WTC11 (cell line): ENCODE measurements at regions of chr12 and their contacts with region 1.

Region 1: DNA sequence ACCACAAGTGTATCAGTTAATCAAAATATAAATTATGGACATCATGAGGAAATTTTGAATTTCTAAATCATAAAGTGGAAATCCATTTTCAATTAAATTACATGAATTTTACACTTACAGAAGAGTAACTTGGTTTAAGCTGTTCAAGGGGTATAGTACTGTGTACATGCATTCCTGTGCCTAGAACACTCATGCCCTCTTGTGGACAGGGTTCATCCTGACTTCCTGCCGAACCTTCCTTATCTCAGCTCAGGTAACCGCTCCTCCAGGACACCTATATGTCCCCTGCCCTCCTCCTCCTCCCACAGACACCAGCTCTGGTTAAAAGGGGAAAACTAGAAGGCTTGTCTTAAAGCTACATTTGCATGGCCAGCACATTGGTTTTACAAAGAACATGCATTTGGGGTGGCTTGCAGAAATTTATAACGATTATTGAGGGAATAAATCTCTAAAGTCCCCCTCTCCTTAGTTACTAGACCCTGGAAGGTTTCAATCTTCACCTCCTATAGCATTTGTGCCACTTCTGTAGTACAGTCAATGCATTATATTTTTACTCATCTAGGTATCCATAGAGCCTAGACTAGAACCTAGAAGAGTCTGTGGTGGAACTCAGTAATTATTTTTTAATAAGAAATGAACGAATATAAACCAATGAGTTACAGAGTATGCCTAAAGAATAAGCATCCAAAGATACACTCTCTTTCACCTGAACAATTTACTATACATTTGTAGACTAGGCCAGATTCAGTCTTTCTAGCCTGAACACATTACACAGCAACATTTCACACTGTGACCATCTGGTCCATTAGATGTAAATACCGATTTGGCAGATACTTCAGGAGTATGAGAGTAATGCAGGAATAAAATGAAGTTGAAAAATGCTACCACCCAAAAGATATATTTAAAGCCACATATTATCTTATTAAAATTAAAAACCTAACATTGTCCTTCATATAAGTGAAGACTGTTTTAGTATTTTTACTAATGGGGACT is 345.6 kb downstream of the PAWR start:
- DNase-seq: peak; percentile 61
- ATAC-seq: peak; percentile 100
- H3K4me3 Mint-ChIP-seq: no peak overlapping the region
- H3K27ac Mint-ChIP-seq: no peak overlapping the region
- H3K4me1 Mint-ChIP-seq: no peaks in the 10 kb centered on the region
- H3K27me3 Mint-ChIP-seq: no peaks in the 10 kb centered on the region
- CTCF ChIP-seq: peak; percentile 45

Region 2: GRCh38 chr12:79274501-79275064 is 70.6 kb before region 1 on chr12:
- CTCF ChIA-PET with region 1: interaction called, 11 read pairs
- POLR2A ChIA-PET with region 1: no interaction called
- DNase-seq: peak; percentile 17
- ATAC-seq: peak; percentile 84
- H3K4me3 Mint-ChIP-seq: no peak overlapping the region
- H3K27ac Mint-ChIP-seq: 0 out of 2 replicates have a peak overlapping the region, but pooled peaks have one; percentile 8
- H3K4me1 Mint-ChIP-seq: peaks cover 23% of the 10 kb centered on the region
- H3K27me3 Mint-ChIP-seq: no peaks in the 10 kb centered on the region
- CTCF ChIP-seq: no peak